Activated CD8-positive, alpha-beta T cell treated with anti-CD3 and anti-CD28 coated beads, Interleukin-2, amount 10 ng/mL, durations not matched to agents 7 days and 5 days (primary cell): ENCODE measurements at regions of chr6 and their contacts with region 1.

Region 1: DNA sequence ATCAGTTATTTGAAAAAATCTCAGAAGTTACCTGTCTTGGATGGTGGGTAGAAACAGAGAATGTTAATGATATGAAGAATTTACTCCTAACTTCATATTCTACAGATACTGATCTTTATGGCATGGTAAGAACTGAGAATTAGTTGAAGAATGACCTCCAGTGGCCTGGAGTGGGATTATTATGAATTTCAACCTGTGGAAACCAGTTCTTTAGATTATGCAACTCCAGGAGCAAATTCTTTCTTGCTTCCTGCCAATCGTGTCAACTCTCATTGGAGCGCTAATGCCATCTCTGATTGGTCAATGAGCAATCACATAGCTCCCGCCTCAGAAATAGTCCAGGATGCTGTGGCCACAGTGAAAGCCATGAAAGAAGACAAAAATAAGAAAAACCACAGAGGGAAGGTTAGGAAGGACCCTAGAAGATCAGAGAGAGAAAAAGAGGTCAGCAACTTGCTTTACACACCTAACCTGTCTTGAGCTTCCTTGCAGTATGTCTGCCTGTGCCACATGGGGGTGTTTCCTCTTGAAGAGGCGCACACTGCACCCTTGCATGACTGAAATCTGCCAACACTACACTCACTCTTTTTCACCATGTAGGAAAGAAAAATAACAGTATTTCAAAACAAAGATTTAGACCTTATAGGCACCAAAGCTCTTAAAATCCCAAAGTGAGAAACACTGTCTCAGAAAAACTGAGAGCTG is 40.4 kb downstream of the LYRM2 start:
- DNase-seq: peak; percentile 26
- ATAC-seq: peak; percentile 33
- H3K4me3 Mint-ChIP-seq: no peak overlapping the region
- H3K27ac Mint-ChIP-seq: peak overlapping the region; percentile 79
- H3K4me1 Mint-ChIP-seq: peaks cover 49% of the 10 kb centered on the region
- H3K27me3 Mint-ChIP-seq: no peaks in the 10 kb centered on the region

Region 2: DNA sequence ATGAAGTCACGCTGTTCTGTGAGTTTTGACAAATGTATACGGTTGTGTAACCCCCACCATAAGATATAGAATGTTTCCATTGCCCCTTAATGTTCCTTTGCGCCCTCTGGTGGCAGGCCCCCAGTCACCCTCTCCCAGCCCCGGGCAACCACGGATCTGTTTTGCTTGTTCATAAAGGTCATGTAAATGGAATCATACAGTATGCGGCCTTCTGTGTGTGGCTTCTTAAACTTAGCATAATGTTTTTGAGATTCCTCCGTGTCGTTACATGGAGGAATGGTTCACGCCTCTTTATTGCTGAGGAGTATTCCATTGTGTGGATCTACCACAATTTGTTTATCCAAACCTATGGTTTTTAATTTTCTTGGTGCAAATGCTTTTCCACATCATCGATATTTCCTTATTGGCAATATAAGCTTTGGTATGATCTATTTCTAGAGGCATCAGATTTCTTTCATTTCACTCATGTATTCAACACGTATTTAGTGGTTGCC is 12.1 kb after region 1 on chr6:
- CTCF ChIA-PET with region 1: interaction called, 39 read pairs
- POLR2A ChIA-PET with region 1: interaction called, 3 read pairs
- DNase-seq: peak; percentile 85
- ATAC-seq: peak; percentile 88
- H3K4me3 Mint-ChIP-seq: no peak overlapping the region
- H3K27ac Mint-ChIP-seq: no peak overlapping the region
- H3K4me1 Mint-ChIP-seq: peaks cover 24% of the 10 kb centered on the region
- H3K27me3 Mint-ChIP-seq: no peaks in the 10 kb centered on the region